IMR-90 (cell line): ENCODE measurements at regions of chr20 and their contacts with region 1.

Region 1: DNA sequence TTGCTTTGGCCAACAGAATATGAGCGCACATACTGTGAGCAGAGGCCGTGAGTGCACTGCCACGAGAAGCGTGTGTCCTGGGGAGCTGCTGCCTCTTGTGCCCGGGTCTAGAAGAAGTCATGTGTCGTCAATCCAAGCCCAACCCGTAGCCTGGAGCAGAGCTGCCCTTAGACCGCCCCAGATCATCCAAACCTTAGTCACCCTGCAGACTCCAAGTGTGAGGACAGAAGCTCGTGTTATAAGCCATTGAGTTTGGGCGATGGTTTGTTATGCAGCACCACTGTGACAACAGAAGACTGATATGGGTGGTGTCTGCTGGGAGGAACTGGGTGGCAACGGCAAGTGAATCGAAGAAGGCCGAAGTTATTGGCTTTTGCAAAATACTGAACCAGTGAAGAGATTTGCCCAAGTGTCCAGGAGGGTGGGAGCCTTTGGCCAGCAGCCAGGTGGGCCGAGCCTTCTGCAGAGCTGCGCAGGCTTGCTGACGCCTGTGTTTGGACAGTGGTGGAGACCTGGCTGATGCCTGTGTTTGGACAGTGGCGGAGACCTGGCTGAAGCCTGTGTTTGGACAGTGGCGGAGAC is 101.3 kb upstream of the SULF2 start:
- DNase-seq: no peak
- ATAC-seq: no peak
- H3K4me3 ChIP-seq: no peak overlapping the region
- H3K27ac ChIP-seq: no peak overlapping the region
- H3K4me1 ChIP-seq: no peaks in the 10 kb centered on the region
- H3K27me3 ChIP-seq: no peaks in the 10 kb centered on the region; the same call in 1 of the 2 replicates
- CTCF ChIP-seq: no peak
- POLR2A ChIP-seq: no peak
- RAD21 ChIP-seq: no peak

Region 2: GRCh38 chr20:47809913-47810622 is 76.5 kb before region 1 on chr20:
- CTCF ChIA-PET with region 1: no interaction called
- POLR2A ChIA-PET with region 1: no interaction called
- dilution Hi-C with region 1: no loop called
- in situ Hi-C with region 1: no loop called
- intact Hi-C with region 1: loop called (anchors 10 kb)
- DNase-seq: no peak
- ATAC-seq: no peak
- H3K4me3 ChIP-seq: no peak overlapping the region
- H3K27ac ChIP-seq: no peak overlapping the region
- H3K4me1 ChIP-seq: no peaks in the 10 kb centered on the region
- H3K27me3 ChIP-seq: peaks cover 30% of the 10 kb centered on the region; the same call in 1 of the 2 replicates
- CTCF ChIP-seq: no peak
- POLR2A ChIP-seq: no peak
- RAD21 ChIP-seq: no peak

Region 3: DNA sequence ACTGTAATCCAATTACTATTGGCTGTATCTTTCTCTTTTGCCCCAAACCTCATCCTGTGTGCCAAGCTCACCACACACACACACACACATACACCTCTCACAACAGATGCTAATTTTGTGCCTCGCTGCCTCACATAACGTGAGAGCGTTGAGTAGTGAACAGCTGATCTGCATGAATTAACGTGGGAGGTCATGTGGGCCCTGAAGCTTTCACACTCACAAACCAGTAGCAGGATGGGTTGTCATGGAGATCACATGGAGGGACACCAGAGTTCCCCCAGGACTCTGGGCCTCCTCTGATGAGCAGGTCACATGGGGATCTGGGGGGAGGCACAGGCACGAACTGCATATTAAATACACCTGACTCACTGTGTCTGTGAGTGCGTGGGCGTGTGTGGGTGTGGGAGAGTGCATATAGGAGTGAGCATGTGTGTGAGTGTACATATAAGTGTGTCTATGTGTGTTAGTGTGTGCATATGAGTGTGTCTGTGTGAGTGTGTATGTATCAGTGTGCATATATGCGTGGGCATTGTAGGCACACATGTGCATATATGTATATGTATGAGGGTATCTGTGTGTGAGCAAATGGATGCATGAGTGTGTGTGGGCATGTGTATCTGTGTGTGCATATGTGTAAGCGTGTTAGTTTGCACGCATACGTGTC is 38.6 kb before region 1 on chr20:
- CTCF ChIA-PET with region 1: no interaction called
- POLR2A ChIA-PET with region 1: no interaction called
- dilution Hi-C with region 1: no loop called
- in situ Hi-C with region 1: loop called (anchors 10 kb)
- intact Hi-C with region 1: no loop called
- DNase-seq: no peak
- ATAC-seq: no peak
- H3K4me3 ChIP-seq: no peak overlapping the region
- H3K27ac ChIP-seq: no peak overlapping the region
- H3K4me1 ChIP-seq: no peaks in the 10 kb centered on the region
- H3K27me3 ChIP-seq: peaks cover 1% of the 10 kb centered on the region; the same call in 1 of the 2 replicates
- CTCF ChIP-seq: no peak
- POLR2A ChIP-seq: no peak
- RAD21 ChIP-seq: no peak

Region 4: DNA sequence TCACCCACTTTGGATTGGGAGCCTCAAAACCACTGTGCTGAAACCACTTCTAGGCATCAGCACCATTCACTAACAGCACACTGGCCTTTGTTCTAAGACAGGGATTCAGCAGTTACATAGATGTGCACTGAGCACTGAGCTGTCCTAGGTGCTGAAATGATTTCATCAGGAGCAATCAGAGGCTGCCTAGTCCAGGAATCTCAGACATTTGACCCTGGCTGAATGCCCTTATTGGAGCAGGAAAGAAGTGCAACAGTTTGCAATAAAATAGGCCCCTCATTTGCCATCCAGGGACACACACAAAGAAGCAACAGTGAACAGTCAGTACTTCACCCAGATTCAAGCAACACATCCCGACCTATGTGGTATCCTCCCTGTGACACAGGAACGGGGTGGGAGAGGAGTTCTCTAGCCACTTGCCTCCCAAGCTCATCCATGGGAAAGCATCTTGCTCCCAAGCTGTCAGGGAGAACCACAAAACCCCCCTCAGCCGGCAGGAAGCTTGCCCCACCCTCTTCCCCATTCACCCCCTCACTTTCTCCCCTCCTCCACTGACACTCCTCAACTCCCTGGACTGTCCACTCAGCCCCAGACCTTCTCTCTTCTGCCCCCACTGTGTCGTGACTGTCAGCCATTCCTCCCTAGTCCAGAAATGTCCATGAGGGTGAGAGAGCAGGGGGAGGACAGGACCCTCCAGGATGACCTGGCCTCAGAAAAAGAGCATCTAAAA is 636.8 kb after region 1 on chr20:
- CTCF ChIA-PET with region 1: no interaction called
- POLR2A ChIA-PET with region 1: no interaction called
- dilution Hi-C with region 1: no loop called
- in situ Hi-C with region 1: loop called (anchors 5 kb)
- intact Hi-C with region 1: loop called (anchors 5 kb)
- DNase-seq: peak; percentile 59
- ATAC-seq: peak; percentile 83
- H3K4me3 ChIP-seq: no peak overlapping the region
- H3K27ac ChIP-seq: no peak overlapping the region
- H3K4me1 ChIP-seq: no peaks in the 10 kb centered on the region
- H3K27me3 ChIP-seq: no peaks in the 10 kb centered on the region
- CTCF ChIP-seq: no peak
- POLR2A ChIP-seq: no peak
- RAD21 ChIP-seq: no peak